Activated B cell treated with CpG ODN at 0.5 μM for 24 hours (primary cell): ENCODE measurements at regions of chr15 and their contacts with region 1.

Region 1: DNA sequence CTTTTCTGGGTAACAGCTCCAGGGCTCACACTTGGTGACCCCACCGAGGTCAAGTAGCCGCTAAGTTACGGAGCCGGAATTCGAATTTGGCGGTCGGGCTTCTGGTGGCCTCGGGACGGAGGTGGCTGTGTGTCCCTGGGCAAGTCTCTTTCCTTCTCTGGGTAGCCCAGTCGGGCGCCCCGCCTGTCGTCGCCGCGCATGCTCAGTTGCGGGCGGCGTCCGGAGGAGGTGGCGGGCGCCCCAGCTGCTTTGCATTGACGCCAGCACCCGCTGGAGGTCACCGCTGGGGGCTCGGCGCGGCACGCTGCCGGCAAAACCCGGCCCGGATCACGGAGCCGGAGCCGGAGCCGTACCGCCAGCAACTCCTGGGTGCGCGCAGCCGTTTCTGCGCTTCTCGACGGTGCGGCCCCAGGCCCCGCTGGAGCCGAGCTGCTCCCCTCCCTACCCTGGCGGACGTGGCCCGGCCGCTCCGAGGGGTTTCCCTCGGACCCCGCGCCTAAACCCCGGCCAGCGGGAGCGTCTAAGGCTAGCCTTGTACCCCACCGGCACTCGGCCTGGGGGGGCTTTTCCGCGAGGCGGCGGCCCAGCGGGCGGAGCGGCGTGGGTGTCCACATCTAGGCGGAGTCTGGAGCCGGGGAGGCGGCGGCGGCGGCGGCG is 474 bp upstream of the PDE8A start:
- DNase-seq: peak; percentile 98
- ATAC-seq: peak; percentile 78
- H3K4me3 Mint-ChIP-seq: peak overlapping the region; percentile 94
- H3K27ac Mint-ChIP-seq: peak overlapping the region; percentile 93
- H3K4me1 Mint-ChIP-seq: peaks cover 39% of the 10 kb centered on the region
- H3K27me3 Mint-ChIP-seq: no peaks in the 10 kb centered on the region
- CTCF ChIP-seq: no peak

Region 2: DNA sequence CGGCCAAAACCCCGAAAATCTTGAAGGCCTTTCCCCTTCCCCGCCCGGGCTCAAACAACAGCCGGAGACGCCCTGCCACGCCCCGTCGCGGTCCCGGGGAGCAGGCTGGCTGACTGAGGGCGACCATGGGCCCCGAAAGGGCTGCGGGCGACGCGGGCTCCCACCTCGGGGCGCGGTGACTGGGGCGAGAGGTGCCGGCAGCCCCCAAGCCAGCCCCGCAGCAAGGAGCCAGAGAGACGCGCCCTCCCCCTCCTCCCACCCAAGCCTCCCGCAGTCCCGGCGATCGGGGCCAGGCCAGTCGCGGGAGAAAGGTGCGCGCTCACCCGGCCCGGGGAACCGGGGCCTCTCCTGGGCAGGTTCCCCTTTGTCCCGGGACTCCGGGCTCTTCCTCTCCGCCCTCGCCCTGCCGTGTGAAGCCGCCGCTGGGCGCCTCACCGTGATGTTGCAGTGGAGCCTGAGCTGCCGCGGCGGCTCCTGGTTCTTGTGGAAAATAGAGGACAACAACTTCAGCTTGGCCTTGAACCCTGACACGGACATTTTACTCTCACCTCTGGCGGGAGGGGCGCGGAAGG is 410.9 kb before region 1 on chr15:
- CTCF ChIA-PET with region 1: interaction called, 3 read pairs
- POLR2A ChIA-PET with region 1: interaction called, 10 read pairs
- intact Hi-C with region 1: loop called (anchors 5 kb)
- DNase-seq: peak; percentile 44
- ATAC-seq: peak; percentile 55
- H3K4me3 Mint-ChIP-seq: peak overlapping the region; percentile 91
- H3K27ac Mint-ChIP-seq: peak overlapping the region; percentile 70
- H3K4me1 Mint-ChIP-seq: peaks cover 8% of the 10 kb centered on the region
- H3K27me3 Mint-ChIP-seq: no peaks in the 10 kb centered on the region
- CTCF ChIP-seq: no peak

Region 3: GRCh38 chr15:84633311-84634227 is 347.6 kb before region 1 on chr15:
- CTCF ChIA-PET with region 1: no interaction called
- POLR2A ChIA-PET with region 1: interaction called, 9 read pairs
- intact Hi-C with region 1: loop called (anchors 1 kb)
- DNase-seq: peak; percentile 67
- ATAC-seq: peak; percentile 45
- H3K4me3 Mint-ChIP-seq: peak overlapping the region; percentile 91
- H3K27ac Mint-ChIP-seq: peak overlapping the region; percentile 87
- H3K4me1 Mint-ChIP-seq: peaks cover 50% of the 10 kb centered on the region
- H3K27me3 Mint-ChIP-seq: no peaks in the 10 kb centered on the region
- CTCF ChIP-seq: no peak

Region 4: GRCh38 chr15:84947947-84948830 is 33.0 kb before region 1 on chr15:
- CTCF ChIA-PET with region 1: no interaction called
- POLR2A ChIA-PET with region 1: no interaction called
- intact Hi-C with region 1: no loop called
- DNase-seq: no peak
- ATAC-seq: no peak
- H3K4me3 Mint-ChIP-seq: no peak overlapping the region
- H3K27ac Mint-ChIP-seq: no peak overlapping the region
- H3K4me1 Mint-ChIP-seq: no peaks in the 10 kb centered on the region
- H3K27me3 Mint-ChIP-seq: peaks cover 6% of the 10 kb centered on the region
- CTCF ChIP-seq: no peak

Region 5: GRCh38 chr15:84992157-84992944 is 11.2 kb after region 1 on chr15:
- CTCF ChIA-PET with region 1: no interaction called
- POLR2A ChIA-PET with region 1: interaction called, 19 read pairs
- intact Hi-C with region 1: loop called (anchors 1 kb)
- DNase-seq: no peak
- ATAC-seq: peak; percentile 33
- H3K4me3 Mint-ChIP-seq: no peak overlapping the region
- H3K27ac Mint-ChIP-seq: peak overlapping the region; percentile 60
- H3K4me1 Mint-ChIP-seq: peaks cover 48% of the 10 kb centered on the region
- H3K27me3 Mint-ChIP-seq: no peaks in the 10 kb centered on the region
- CTCF ChIP-seq: no peak

Region 6: DNA sequence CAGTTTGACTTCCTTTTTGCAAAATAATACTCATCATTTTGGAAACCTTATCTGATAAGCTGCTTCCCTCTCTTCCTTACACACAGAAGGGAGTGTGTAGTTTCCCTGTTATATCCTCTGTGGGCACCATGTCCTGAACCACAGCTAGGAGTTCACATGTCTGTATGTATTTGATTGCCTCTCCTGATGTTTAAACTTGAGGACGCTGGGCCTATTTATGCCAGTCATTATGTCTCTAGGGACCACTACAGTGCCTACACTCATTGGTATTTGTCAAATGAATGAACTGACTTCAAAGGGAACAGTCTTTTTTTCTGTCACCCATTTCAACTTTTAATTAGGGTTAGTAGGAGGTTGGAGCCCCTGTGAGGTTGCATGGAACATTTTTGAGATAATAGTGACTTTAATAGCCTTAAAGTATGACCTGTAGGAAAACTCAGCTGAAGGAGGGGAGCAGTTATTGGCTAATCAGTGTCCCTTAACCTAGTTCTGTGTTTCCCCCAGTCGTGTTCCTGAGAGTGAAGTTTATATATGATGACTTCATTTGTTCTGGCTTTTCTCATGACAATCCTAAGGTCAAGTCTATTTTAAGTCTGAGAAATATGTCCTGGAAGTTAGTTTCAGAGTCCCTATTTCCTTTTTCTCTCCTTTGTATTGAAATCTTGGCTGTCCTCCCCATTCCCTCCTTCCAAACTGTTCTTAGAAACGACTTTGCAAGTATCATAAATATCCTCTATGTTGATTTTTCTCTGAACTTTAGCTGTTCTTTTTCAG is 29.4 kb after region 1 on chr15:
- CTCF ChIA-PET with region 1: interaction called, 4 read pairs
- POLR2A ChIA-PET with region 1: interaction called, 22 read pairs
- intact Hi-C with region 1: loop called (anchors 1 kb)
- DNase-seq: no peak
- ATAC-seq: peak; percentile 75
- H3K4me3 Mint-ChIP-seq: peak overlapping the region; percentile 33
- H3K27ac Mint-ChIP-seq: peak overlapping the region; percentile 74
- H3K4me1 Mint-ChIP-seq: peaks cover 61% of the 10 kb centered on the region
- H3K27me3 Mint-ChIP-seq: no peaks in the 10 kb centered on the region
- CTCF ChIP-seq: no peak

Region 7: DNA sequence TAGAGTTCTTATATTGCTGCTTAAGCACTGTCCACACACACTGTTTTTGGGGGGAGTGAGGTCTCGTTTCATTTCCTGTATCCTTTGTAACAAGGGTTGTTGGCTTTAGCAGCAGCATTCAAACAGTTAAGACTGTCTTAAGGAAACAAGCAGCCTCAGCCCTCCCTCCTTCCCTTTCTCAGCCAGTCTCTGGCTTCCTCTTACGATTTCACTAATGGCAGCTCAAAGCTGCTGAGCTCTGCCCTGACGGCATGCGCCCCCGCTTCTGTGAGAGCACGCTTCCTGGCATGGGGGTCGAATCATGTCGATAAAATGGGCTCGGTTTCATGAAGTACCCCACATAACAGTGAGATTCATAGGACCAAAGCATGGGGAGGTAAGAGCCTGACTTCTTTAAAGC is 708.5 kb after region 1 on chr15:
- CTCF ChIA-PET with region 1: no interaction called
- POLR2A ChIA-PET with region 1: interaction called, 4 read pairs
- intact Hi-C with region 1: loop called (anchors 5 kb)
- DNase-seq: peak; percentile 46
- ATAC-seq: peak; percentile 59
- H3K4me3 Mint-ChIP-seq: peak overlapping the region; percentile 95
- H3K27ac Mint-ChIP-seq: peak overlapping the region; percentile 98
- H3K4me1 Mint-ChIP-seq: peaks cover 78% of the 10 kb centered on the region
- H3K27me3 Mint-ChIP-seq: no peaks in the 10 kb centered on the region
- CTCF ChIP-seq: no peak